Body of pancreas (tissue), 4 donors: ENCODE measurements at regions of chr2 and their contacts with region 1.

Region 1: GRCh38 chr2:200713003-200713703 is 98.6 kb upstream of the BZW1 start:
- DNase-seq: peak; percentile 78 to 93 (median 83)
- ATAC-seq: peak; percentile 99
- H3K4me3 ChIP-seq: no peak overlapping the region
- H3K27ac ChIP-seq: peak overlapping the region in 3 of 4 donors; percentile 41 to 80 (median 77)
- H3K4me1 ChIP-seq: peaks cover 6% of the 10 kb centered on the region
- H3K27me3 ChIP-seq: no peaks in the 10 kb centered on the region
- CTCF ChIP-seq: peak; percentile 62 to 91 (median 85)
- POLR2A ChIP-seq: peak; percentile 12 to 81 (median 81)

Region 2: DNA sequence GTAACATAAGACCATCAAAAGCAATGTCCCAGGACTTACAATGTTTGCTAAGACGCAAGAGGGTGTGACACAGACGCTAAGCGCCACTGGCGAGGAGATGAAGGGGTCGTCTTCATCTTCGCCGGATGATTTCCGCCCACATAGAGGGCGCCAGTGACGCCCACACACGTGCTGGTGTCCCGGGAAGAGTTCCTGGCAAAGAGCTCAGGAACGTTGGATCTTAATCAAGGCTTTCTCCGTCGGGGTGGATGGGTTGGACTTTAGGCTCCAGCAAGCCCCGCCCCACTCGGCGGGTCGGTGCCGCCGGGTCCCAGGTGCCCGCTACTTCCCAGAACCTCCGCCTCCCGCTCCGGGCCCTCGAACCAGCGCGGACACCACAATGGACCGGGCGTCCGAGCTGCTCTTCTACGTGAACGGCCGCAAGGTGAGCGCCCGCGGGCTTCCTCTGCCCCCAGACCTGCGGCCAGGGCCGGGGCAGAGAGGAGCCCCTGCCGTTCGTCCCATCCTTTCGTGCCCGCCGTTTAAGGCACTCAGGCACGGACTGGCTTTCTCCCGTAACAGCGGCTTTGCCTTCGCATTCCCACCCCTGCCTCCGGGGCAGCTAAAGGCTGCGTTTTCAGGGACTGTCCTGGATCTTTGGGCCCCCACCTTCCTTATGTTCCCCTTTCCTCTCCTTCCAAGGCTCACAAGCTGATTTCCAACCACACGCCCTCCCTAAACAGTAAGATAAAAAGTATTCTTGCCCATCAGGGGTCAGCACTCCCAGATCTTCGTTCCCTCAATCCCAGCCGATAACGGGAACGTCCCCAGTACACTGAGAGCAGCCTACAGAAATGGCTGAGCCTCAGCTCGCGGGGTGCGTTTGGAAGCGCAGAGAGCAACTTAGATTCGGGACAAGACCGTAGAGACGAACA is 127.2 kb before region 1 on chr2 and contains the start of gene AOX1:
- intact Hi-C with region 1: no loop called
- DNase-seq: peak; percentile 74 to 85 (median 80)
- ATAC-seq: peak; percentile 81
- H3K4me3 ChIP-seq: peak within 1 kb of the TSS; percentile 20 to 80
- H3K27ac ChIP-seq: peak within 1 kb of the TSS in 3 of 4 donors; percentile 73 to 79 (median 79)
- H3K4me1 ChIP-seq: peaks cover 35% of the 10 kb centered on the region
- H3K27me3 ChIP-seq: no peaks in the 10 kb centered on the region
- CTCF ChIP-seq: peak in 1 of 7 experiments; percentile 3
- POLR2A ChIP-seq: peak in 2 of 3 donors; percentile 70 to 75
- total RNA-seq, gene AOX1: 60.0 to 75.0 TPM

Region 3: DNA sequence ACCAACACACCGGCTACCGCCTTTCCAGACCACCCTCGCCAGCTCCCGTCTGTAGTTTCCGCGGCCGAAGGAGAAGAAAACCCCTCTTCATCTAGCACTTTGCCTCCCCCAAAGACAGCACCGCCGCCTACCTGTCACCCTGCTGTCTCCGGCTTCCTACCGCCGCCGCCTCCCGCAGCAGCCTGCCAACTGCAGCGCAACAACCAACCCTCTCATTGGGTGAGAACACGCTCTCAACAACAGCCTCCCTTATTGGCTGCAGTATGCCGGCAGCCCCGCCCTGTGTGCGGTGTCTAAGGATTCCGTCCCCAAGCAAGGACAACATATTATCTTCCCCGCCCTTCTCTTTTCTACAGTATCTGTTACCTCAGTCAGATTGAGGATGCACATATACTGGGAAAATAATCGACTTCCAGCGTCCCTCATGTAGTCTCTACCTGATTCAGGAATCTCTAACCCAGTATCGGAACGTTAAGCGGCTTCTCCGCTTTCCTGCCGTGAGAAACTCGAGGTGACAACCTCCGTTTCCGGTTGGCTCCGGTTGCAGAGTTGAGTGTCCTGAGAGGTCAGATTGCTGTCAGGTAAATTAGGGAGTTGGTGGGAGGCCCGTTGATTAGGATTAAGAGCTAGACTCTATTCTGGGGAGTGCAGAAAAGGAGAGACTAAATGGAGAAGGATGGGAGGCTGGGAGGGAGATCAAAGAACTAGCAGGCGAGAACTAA is 358.5 kb after region 1 on chr2 and contains the starts of genes HYCC2 and NDUFB3:
- intact Hi-C with region 1: loop called (anchors 10 kb)
- DNase-seq: peak; percentile 90 to 93 (median 92)
- ATAC-seq: peak; percentile 100
- H3K4me3 ChIP-seq: peak within 1 kb of the TSS; percentile 71 to 93
- H3K27ac ChIP-seq: peak within 1 kb of the TSS; percentile 73 to 94 (median 88)
- H3K4me1 ChIP-seq: peaks cover 36% of the 10 kb centered on the region
- H3K27me3 ChIP-seq: no peaks in the 10 kb centered on the region
- CTCF ChIP-seq: peak in 5 of 7 experiments; percentile 22 to 66 (median 48)
- POLR2A ChIP-seq: peak in 2 of 3 donors; percentile 75 to 82
- total RNA-seq, gene HYCC2: 9.3 to 24.7 TPM
- total RNA-seq, gene NDUFB3: 19.8 to 31.1 TPM